PC-3 (cell line): ENCODE measurements at regions of chr2 and their contacts with region 1.

Region 1: DNA sequence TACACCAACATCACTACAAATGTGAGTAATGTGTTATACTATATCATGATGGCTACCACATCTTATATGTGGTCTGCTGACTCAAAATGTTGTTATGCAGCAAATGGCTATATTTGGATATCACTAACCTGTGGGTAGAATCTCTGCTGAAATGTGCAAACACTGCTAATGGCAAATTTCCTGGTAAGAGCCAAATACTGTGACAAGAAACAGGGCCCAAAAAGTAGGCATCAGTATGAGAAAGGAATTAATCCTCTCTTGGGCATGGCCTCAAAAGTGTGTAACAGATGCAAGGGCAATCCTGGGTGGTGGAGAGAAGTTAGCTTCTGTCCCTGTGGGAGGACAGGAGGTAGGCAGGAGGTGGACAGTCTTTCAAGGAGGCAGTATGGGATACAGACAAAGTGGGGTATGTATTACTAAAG is 13.3 kb downstream of the ATF2 start:
- DNase-seq: peak; percentile 93
- ATAC-seq: peak; percentile 94
- H3K4me3 ChIP-seq: no peak overlapping the region
- H3K27ac ChIP-seq: peak overlapping the region; percentile 81
- H3K4me1 ChIP-seq: peaks cover 37% of the 10 kb centered on the region
- H3K27me3 ChIP-seq: no peaks in the 10 kb centered on the region
- CTCF ChIP-seq: no peak

Region 2: DNA sequence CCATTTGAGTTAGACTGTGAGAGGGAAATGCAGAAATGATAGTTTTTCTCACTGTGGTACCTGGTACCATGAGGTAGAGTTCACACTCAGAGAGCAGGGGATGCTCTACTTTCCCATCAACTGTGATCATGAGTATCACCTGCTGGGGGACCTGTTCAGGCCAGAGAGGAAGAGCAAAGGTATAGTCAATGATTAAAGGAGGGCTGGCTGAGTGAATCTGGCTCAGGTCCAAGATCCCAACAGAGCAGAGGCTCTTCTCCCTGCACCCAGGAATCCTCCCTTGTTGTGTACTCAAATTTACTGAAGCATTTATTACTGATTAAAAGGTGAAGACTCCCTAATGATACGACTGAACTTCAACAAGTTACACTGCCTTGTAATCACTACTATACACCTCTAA is 285.8 kb before region 1 on chr2:
- CTCF ChIA-PET with region 1: no interaction called
- POLR2A ChIA-PET with region 1: no interaction called
- intact Hi-C with region 1: no loop called
- DNase-seq: no peak
- ATAC-seq: no peak
- H3K4me3 ChIP-seq: no peak overlapping the region
- H3K27ac ChIP-seq: no peak overlapping the region
- H3K4me1 ChIP-seq: no peaks in the 10 kb centered on the region
- H3K27me3 ChIP-seq: no peaks in the 10 kb centered on the region
- CTCF ChIP-seq: no peak

Region 3: DNA sequence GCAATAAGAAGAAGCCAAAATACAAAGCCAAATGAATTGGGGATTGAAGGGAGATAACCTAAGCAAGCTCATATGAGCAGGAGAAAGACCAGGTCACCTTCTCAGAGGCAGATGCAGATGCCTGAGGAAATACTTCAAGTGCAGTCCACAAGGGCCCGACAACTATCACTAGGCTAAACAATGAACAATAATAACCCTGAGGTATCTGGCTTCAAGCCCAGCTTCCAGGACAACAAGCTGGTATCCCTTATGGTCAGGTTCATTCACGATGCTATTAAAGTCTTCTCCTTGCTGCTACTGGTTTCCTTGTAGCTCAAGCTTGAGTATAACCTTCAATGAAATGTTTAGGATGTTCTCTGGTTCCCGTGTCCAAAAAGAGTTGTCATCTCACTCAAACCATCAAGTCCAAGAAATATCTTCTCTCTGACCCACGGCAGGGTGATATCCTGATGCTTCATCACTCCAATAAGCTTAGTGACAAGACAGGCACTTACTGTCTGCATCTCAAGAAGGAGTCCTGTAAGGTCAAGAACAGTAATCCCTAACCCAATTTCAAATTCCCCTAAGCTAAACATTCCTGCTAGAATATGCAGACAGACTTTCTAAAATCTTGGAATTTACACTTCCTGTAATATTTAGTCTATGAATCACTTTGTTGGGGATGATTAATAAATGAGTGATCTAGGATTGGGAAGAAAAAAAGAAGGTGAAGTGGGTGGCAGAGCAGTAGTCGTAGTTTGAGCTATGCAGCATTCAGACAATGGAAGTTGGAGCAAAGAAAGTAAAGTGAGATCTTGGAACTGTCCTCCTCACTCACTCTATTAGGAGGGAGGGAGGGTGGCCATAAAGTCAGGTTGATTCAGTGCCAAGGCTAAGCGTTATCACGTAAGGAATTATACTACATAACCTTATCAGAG is 182.5 kb before region 1 on chr2:
- CTCF ChIA-PET with region 1: no interaction called
- POLR2A ChIA-PET with region 1: no interaction called
- intact Hi-C with region 1: no loop called
- DNase-seq: peak; percentile 88
- ATAC-seq: peak; percentile 81
- H3K4me3 ChIP-seq: 0 out of 2 replicates have a peak overlapping the region, but pooled peaks have one; percentile 19
- H3K27ac ChIP-seq: peak overlapping the region; percentile 83
- H3K4me1 ChIP-seq: peaks cover 42% of the 10 kb centered on the region
- H3K27me3 ChIP-seq: no peaks in the 10 kb centered on the region
- CTCF ChIP-seq: no peak

Region 4: GRCh38 chr2:175111200-175111657 is 43.4 kb before region 1 on chr2:
- CTCF ChIA-PET with region 1: no interaction called
- POLR2A ChIA-PET with region 1: no interaction called
- intact Hi-C with region 1: loop called (anchors 5 kb)
- DNase-seq: peak; percentile 75
- ATAC-seq: peak; percentile 81
- H3K4me3 ChIP-seq: no peak overlapping the region
- H3K27ac ChIP-seq: no peak overlapping the region
- H3K4me1 ChIP-seq: no peaks in the 10 kb centered on the region
- H3K27me3 ChIP-seq: no peaks in the 10 kb centered on the region
- CTCF ChIP-seq: peak; percentile 86

Region 5: DNA sequence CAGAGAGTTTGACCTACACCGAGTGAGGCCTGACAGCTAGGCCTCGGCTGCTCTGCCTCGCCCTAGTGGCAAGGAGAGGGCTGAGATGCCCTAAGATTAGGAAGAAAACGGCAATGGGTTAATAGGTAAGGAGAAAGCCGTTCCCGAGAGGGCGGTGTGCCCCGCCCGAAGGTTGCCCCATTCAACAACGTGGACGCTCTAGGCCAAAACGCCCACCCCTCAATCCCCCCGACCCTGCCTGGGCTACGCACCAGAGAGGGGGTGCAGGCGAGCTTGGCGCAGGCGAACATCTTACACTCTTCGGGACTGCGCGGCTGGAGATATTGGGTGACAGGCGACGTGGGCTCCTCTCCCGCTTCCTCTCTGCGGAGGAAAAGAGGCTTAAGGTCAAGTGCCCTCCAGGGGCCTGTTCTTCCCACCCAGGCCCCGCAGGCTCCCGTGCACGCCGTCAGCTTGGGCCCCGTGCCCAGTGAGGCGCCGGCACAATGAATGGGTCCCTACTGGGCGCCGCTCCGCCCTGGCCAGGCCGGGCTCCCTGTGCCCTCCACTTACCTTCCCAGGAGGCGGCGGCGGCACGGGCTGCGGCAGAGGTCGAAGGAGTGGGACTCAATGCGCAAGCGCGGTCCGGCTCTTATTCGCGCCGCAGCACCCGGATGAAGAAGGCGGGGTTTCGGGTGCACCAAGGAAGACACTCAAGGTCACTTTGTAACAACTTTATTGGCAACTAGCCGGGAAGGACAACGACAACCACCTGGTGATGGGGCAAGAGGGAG is 26.6 kb after region 1 on chr2 and contains the start of gene ATP5MC3:
- CTCF ChIA-PET with region 1: no interaction called
- POLR2A ChIA-PET with region 1: interaction called, 10 read pairs
- intact Hi-C with region 1: no loop called
- DNase-seq: peak; percentile 95
- ATAC-seq: peak; percentile 86
- H3K4me3 ChIP-seq: peak within 1 kb of the TSS; percentile 89
- H3K27ac ChIP-seq: peak within 1 kb of the TSS; percentile 57
- H3K4me1 ChIP-seq: peaks cover 45% of the 10 kb centered on the region
- H3K27me3 ChIP-seq: no peaks in the 10 kb centered on the region
- CTCF ChIP-seq: peak; percentile 30; the same call in 1 of the 2 replicates
- total RNA-seq, gene ATP5MC3: 214 and 254 TPM in 2 replicates

Region 6: DNA sequence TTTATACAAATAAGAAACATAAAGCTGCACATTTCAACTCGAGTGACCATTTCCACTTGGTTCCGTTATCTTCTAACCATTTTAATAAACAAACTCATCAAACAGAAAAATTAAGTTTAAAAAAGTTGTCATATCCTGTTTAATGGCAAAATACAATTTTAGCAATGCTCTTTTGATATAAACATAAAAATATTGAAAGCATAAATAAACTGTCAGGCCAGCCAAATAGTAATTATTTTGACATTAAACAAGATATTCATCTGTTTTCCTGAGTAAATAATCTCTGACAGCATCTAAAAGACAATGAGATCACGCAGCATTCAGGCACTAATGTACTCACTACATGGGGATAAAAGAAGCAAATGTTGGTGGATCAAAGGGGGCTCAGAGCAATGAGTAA is 172.1 kb after region 1 on chr2:
- CTCF ChIA-PET with region 1: no interaction called
- POLR2A ChIA-PET with region 1: no interaction called
- intact Hi-C with region 1: no loop called
- DNase-seq: no peak
- ATAC-seq: no peak
- H3K4me3 ChIP-seq: no peak overlapping the region
- H3K27ac ChIP-seq: no peak overlapping the region
- H3K4me1 ChIP-seq: no peaks in the 10 kb centered on the region
- H3K27me3 ChIP-seq: peaks cover 7% of the 10 kb centered on the region; the same call in 1 of the 2 replicates
- CTCF ChIP-seq: no peak

Region 7: DNA sequence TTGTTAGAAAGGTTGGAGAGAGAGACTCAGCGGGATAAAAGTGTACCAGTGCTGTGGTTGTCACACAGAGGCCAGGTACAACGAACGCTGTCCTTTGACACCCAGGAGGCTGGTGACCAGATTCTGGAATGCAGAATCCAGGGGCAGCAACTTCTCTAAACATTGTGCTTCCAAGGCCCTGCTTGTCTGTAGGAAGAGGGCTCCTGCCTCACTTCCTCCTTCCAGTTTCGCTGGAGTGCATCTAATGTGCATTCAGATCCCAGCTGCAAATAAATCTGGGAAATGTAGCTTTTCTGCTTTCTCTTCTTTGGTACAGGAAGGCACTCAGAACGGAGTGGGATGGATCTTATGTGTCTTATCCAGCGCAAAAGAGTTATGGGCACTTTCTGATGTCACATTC is 198.6 kb after region 1 on chr2:
- CTCF ChIA-PET with region 1: no interaction called
- POLR2A ChIA-PET with region 1: no interaction called
- intact Hi-C with region 1: no loop called
- DNase-seq: no peak
- ATAC-seq: no peak
- H3K4me3 ChIP-seq: no peak overlapping the region
- H3K27ac ChIP-seq: no peak overlapping the region
- H3K4me1 ChIP-seq: no peaks in the 10 kb centered on the region
- H3K27me3 ChIP-seq: peaks cover 71% of the 10 kb centered on the region
- CTCF ChIP-seq: no peak